ENCODE measurements at regions of chr10 and their contacts with region 1.

Region 1: DNA sequence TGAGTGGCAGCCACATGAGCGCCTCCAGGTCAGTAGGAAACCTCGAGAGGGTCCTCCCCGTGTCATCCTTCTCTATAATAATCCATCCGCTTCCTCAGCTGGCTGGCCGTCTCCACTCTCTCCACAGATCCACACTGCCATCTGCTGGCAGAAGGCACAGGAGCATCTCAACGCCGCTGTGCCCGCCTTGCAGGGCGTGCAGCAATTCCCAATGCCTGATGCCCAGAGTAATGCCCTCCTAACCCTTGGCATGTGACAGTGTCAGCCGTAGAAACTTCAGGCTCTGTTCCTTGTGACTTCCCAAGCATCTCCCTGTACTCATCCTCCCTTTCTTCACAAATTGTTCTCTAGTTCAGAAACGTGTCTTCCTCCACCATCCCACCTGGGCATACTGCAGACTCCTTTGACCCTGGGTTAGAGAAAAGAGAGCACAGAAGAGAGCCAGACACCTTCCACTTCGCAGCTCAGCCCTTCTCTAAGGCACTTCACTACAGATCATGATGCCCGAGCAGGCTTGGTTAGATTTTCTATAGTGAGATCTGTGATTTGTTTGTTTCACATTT is 70.8 kb downstream of the XPNPEP1 start:
- DNase-seq: peak; percentile 29 to 93
- H3K4me3 ChIP-seq: no peak overlapping the region
- H3K27ac ChIP-seq: no peak overlapping the region
- H3K4me1 ChIP-seq: no peaks in the 10 kb centered on the region
- H3K27me3 ChIP-seq: no peaks in the 10 kb centered on the region
- CTCF ChIP-seq: peak; percentile 87 to 99 (median 98)
- EP300 ChIP-seq: no peak
- POLR2A ChIP-seq: no peak
- RAD21 ChIP-seq: peak; percentile 97 to 98

Region 2: GRCh38 chr10:109317746-109318366 is 534.7 kb before region 1 on chr10:
- CTCF ChIA-PET with region 1: no interaction called
- POLR2A ChIA-PET with region 1: no interaction called
- DNase-seq: no peak
- H3K4me3 ChIP-seq: no peak overlapping the region
- H3K27ac ChIP-seq: no peak overlapping the region
- H3K4me1 ChIP-seq: no peaks in the 10 kb centered on the region
- H3K27me3 ChIP-seq: no peaks in the 10 kb centered on the region
- CTCF ChIP-seq: no peak
- EP300 ChIP-seq: no peak
- POLR2A ChIP-seq: no peak
- RAD21 ChIP-seq: no peak

Region 3: DNA sequence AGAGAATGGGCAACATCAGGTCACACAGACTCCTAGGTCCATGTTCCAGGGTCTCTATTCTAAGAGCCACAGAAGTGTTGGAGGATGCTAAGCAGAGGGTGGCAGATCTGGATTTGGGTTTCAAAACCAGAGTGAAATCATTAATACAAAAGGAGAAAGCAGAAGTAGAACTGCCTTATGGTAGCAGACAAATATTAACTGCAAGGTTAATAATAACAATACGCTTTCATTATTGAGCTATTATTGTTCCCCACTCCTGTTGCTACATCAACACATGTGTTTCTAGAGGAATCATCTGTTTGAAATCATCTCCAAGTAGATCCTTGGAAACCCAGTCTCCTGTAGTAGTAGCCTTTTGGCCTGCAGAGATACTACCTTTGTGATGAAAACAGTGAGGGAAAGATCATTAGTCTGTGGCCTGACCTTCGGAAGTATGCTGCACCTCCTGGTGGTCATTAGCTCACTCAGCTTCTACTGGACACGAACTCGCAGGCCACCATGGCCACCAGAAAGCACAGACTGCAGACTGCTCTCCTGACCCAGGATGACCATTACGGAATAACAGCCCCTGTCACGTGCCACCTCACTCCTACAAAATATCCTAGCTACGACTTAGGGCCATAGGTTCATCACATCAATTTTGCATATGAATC is 13.8 kb before region 1 on chr10:
- CTCF ChIA-PET with region 1: interaction called, 25 read pairs
- POLR2A ChIA-PET with region 1: no interaction called
- DNase-seq: no peak
- H3K4me3 ChIP-seq: no peak overlapping the region
- H3K27ac ChIP-seq: no peak overlapping the region
- H3K4me1 ChIP-seq: no peaks in the 10 kb centered on the region
- H3K27me3 ChIP-seq: no peaks in the 10 kb centered on the region
- CTCF ChIP-seq: peak in 2 of 3 experiments; percentile 51 to 58; a peak in 3 of 4 replicates
- EP300 ChIP-seq: no peak
- POLR2A ChIP-seq: no peak
- RAD21 ChIP-seq: peak; percentile 60 to 62

Region 4: GRCh38 chr10:109866168-109866994 is 13.8 kb after region 1 on chr10:
- CTCF ChIA-PET with region 1: interaction called, 20 read pairs
- POLR2A ChIA-PET with region 1: interaction called, 6 read pairs
- DNase-seq: no peak
- H3K4me3 ChIP-seq: no peak overlapping the region
- H3K27ac ChIP-seq: no peak overlapping the region
- H3K4me1 ChIP-seq: peaks cover 0 to 4% (median 3%) of the 10 kb centered on the region in 4 experiments; a peak in 4 of 7 replicates
- H3K27me3 ChIP-seq: no peaks in the 10 kb centered on the region
- CTCF ChIP-seq: peak; percentile 25 to 59 (median 47)
- EP300 ChIP-seq: no peak
- POLR2A ChIP-seq: no peak
- RAD21 ChIP-seq: peak; percentile 62 to 74; a peak in 3 of 4 replicates

Measured in H1 (cell line).